Left ventricle myocardium superior (tissue), 1 donor: ENCODE measurements at regions of chr4 and their contacts with region 1.

Region 1: DNA sequence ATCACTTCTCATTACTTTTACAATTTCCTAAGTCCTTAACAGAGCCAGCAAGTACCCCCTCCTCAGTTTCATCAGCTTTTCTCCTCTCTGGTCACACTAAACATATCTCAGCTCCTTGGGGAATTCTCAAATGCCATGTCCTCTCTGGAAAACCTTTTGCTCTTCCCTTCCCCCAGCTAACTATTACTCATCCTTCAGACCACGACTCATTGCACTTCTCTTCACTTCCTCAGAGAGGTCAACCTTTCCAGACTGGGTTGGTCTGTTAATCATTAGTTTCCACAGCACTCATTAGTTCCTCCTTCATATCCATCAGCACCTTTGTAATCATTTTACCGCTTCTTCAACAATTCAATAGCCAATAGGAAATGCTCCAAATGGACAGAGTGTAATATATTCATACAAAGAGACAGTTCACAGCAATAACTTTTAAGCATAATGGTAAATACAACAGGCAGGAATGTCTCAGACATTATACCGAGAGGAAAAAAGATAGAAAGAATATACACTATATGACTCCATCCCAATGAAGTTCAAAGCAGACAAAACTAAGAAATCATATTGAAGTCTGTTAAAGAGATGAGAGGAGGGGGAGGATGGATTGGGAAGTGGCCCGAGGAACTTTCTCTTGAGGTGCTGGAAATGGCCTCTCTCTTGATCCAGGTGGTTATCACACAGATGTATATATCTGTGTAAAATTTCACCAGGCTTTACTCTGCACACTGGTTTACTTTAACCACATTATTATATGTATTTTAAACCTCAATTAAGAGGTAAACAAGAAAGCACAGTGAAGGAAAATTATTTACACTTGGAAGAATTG is 39.6 kb downstream of the DDX60L start:
- DNase-seq: no peak
- ATAC-seq: no peak

Region 2: DNA sequence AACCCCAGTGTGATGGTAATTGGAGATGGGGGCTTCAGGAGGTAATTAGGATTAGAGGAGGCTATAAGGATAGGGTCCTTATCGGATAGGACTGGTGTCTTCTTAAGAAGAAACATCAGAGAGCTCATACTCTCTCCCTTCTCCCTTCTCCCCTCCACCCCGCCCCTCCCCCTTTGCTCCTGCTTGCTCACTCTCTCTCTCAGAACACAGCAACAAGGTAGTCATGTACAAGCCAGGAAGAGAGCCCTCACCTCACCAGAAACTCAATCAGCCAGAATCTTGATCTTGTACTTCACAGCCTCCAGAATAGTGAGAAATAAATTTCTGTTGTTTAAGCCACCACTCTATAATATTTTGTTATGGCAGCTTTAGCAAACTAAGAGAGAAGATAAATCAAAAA is 35.1 kb after region 1 on chr4:
- intact Hi-C with region 1: loop called (anchors 2 kb)
- DNase-seq: no peak
- ATAC-seq: no peak

Region 3: GRCh38 chr4:168758351-168758876 is 317.8 kb after region 1 on chr4:
- intact Hi-C with region 1: no loop called
- DNase-seq: no peak
- ATAC-seq: no peak